ENCODE measurements at regions of chr10 and their contacts with region 1.

Region 1: GRCh38 chr10:29634764-29635625 is at the start of gene SVIL:
- DNase-seq: no peak
- ATAC-seq: peak; percentile 94
- total RNA-seq, gene SVIL: 327 TPM

Region 2: GRCh38 chr10:29517352-29517923 is 117.6 kb before region 1 on chr10:
- intact Hi-C with region 1: loop called (anchors 5 kb)
- DNase-seq: no peak
- ATAC-seq: peak; percentile 41

Region 3: GRCh38 chr10:29598851-29599311 is 36.1 kb before region 1 on chr10:
- intact Hi-C with region 1: loop called (anchors 5 kb)
- DNase-seq: no peak
- ATAC-seq: peak; percentile 85

Region 4: GRCh38 chr10:29795850-29796249 is 160.9 kb after region 1 on chr10:
- intact Hi-C with region 1: no loop called
- DNase-seq: no peak
- ATAC-seq: no peak

Region 5: DNA sequence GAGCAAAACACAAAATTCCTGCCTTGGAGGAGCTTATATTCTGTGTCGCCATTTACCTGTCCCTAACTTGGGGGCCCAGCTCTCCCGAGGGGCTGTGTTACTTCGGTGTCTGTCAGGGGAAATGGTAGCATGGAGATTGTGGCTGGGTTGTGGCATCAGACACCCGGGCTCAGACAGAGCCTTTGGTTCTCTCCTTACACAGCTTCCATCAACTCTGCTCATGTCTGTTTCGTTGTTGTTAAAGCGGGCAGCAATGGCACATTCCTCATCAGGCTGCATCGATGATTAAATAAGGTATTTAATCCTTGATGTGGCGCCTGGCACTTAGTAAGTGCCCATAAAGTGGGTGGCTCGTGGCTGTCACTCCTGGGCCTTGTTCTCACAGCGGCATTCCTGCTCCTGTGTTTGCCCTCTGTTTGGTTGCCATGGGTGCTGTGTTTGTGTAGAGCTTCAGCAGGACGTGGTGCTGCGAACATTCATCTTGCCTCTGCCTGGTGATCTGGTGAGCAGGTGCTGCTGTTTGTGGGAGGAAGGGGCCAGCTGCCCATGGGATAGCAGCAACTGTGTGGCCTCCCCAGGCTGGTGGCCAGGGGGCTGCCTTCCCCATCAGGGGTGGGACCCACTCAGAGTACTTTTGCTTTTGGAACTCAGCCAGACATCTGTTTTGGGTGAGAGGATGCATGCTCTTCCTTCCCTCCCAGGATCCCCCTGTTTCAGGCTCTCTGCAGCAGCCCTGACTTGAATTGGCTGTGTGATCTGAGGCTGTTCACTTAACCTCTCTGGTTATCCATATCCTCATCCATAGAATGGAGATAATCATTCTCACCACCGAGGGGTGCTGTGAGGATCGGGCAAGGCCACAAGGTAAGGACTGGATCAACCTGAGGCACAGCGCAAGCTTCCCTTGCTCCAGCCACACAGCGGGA is 207.0 kb after region 1 on chr10:
- intact Hi-C with region 1: loop called (anchors 5 kb)
- DNase-seq: peak; percentile 79
- ATAC-seq: peak; percentile 93

Region 6: DNA sequence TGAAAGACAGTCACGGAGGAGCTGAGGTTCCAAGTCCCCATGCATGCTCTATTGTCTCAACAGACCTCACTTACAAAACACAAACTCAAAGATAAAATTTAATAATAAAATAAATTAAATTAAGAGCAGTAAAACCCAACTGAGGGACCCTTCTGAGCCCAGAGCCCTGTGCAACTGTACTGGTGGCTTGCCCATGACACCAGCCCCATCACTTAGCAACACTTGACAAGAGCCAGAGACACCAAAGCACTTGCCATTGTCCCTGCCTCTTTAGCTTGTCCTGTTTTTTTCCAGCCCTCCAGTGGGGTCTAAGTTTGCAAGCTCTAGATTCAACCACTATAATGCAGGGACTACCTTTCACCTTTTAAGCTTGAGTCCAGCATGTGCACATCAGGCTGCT is 306.5 kb after region 1 on chr10:
- intact Hi-C with region 1: no loop called
- DNase-seq: no peak
- ATAC-seq: no peak